ENCODE measurements at regions of chr13 and their contacts with region 1.

Region 1: GRCh38 chr13:32538621-32539246 is at the start of gene N4BP2L2:
- DNase-seq: peak; percentile 92 to 96 (median 94)
- H3K4me3 ChIP-seq: peak within 1 kb of the TSS; percentile 84
- H3K27ac ChIP-seq: peak within 1 kb of the TSS; percentile 80
- H3K4me1 ChIP-seq: peaks cover 6% of the 10 kb centered on the region
- H3K27me3 ChIP-seq: no peaks in the 10 kb centered on the region
- CTCF ChIP-seq: peak; percentile 34 to 67 (median 39)
- EP300 ChIP-seq: no peak
- POLR2A ChIP-seq: peak; percentile 84
- total RNA-seq, gene N4BP2L2: 144 to 220 (median 183) TPM

Region 2: GRCh38 chr13:32381539-32381938 is 157.2 kb before region 1 on chr13:
- intact Hi-C with region 1: loop called in 2 of 4 experiments (anchors 5 to 10 kb)
- DNase-seq: peak in 2 of 5 donors; percentile 14 to 33
- H3K4me3 ChIP-seq: no peak overlapping the region
- H3K27ac ChIP-seq: no peak overlapping the region
- H3K4me1 ChIP-seq: peaks cover 1% of the 10 kb centered on the region
- H3K27me3 ChIP-seq: no peaks in the 10 kb centered on the region
- CTCF ChIP-seq: peak; percentile 35 to 62 (median 59)
- EP300 ChIP-seq: no peak
- POLR2A ChIP-seq: no peak

Region 3: GRCh38 chr13:32415019-32415418 is 123.7 kb before region 1 on chr13:
- intact Hi-C with region 1: loop called in 3 of 4 experiments (anchors 10 kb)
- DNase-seq: no peak
- H3K4me3 ChIP-seq: no peak overlapping the region
- H3K27ac ChIP-seq: no peak overlapping the region
- H3K4me1 ChIP-seq: no peaks in the 10 kb centered on the region
- H3K27me3 ChIP-seq: no peaks in the 10 kb centered on the region
- CTCF ChIP-seq: no peak
- EP300 ChIP-seq: no peak
- POLR2A ChIP-seq: no peak

Region 4: GRCh38 chr13:32427852-32428580 is 110.7 kb before region 1 on chr13 and contains the start of gene N4BP2L1:
- intact Hi-C with region 1: loop called in 2 of 4 experiments (anchors 10 kb)
- DNase-seq: peak; percentile 86 to 88 (median 87)
- H3K4me3 ChIP-seq: peak within 1 kb of the TSS; percentile 80
- H3K27ac ChIP-seq: peak within 1 kb of the TSS; percentile 92 to 96
- H3K4me1 ChIP-seq: peaks cover 16% of the 10 kb centered on the region
- H3K27me3 ChIP-seq: no peaks in the 10 kb centered on the region
- CTCF ChIP-seq: no peak
- EP300 ChIP-seq: peak; percentile 7
- POLR2A ChIP-seq: peak; percentile 89
- total RNA-seq, gene N4BP2L1: 22.1 to 63.4 (median 30.1) TPM

Region 5: GRCh38 chr13:34046457-34046856 is 1507.7 kb after region 1 on chr13:
- intact Hi-C with region 1: no loop called
- DNase-seq: no peak
- H3K4me3 ChIP-seq: no peak overlapping the region
- H3K27ac ChIP-seq: no peak overlapping the region
- H3K4me1 ChIP-seq: no peaks in the 10 kb centered on the region
- H3K27me3 ChIP-seq: no peaks in the 10 kb centered on the region
- CTCF ChIP-seq: no peak
- EP300 ChIP-seq: no peak
- POLR2A ChIP-seq: no peak